IMR-90 (cell line): ENCODE measurements at regions of chr7 and their contacts with region 1.

Region 1: DNA sequence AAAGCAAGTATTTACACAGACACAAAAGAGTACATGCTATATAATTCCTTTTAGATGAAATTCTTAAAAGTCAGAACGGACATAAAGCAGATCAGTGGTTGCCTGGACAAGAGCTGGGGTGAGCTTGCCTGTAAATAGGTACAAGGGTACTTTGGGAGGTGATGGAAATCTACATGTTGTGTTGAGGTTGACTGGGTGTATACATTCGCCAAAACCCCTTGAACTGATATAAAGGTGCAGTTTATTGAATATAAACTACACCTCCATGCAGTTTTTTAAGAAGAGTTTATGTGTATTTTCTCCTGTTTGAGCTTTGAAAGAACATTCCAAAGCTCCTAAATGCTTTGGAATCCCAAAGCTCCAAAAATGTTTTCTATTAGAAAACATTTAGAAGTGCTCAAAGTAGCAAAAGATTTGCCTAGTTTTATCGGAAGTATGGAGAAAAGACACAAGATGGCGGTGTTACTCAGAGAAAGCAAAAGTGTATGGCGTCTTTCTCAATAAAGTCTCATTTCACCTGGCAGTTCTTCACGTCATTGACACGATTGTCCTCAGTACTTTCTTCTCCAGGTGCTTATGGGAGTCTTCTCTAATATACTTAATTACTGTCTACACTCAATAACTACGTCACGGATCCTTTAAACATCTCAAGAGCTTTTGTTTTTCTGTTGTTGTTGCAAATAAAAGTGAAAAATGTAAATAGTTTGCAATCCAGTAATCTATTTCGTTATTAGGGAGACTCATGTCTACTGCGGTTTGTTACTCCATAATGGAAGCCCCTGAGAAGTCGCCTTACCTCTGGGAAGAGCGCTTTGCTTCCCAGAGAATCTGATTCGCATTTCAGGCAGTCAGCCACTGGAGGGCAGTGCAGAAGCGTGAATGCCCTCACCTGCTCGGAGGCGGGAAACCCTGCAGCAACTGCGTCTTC is 14.7 kb upstream of the SEC61G start:
- DNase-seq: peak; percentile 84
- ATAC-seq: peak; percentile 95
- H3K4me3 ChIP-seq: peak overlapping the region; percentile 31; the same call in 1 of the 2 replicates
- H3K27ac ChIP-seq: no peak overlapping the region
- H3K4me1 ChIP-seq: no peaks in the 10 kb centered on the region
- H3K27me3 ChIP-seq: no peaks in the 10 kb centered on the region
- CTCF ChIP-seq: peak; percentile 92
- POLR2A ChIP-seq: peak; percentile 53; the same call in 1 of the 2 replicates
- RAD21 ChIP-seq: peak; percentile 99

Region 2: GRCh38 chr7:54788664-54789063 is 14.9 kb after region 1 on chr7:
- CTCF ChIA-PET with region 1: interaction called, 13 read pairs
- POLR2A ChIA-PET with region 1: no interaction called
- dilution Hi-C with region 1: no loop called
- in situ Hi-C with region 1: no loop called
- intact Hi-C with region 1: no loop called
- DNase-seq: peak; percentile 96
- ATAC-seq: peak; percentile 98
- H3K4me3 ChIP-seq: no peak overlapping the region; the same call in 1 of the 2 replicates
- H3K27ac ChIP-seq: no peak overlapping the region
- H3K4me1 ChIP-seq: peaks cover 2% of the 10 kb centered on the region; the same call in 1 of the 2 replicates
- H3K27me3 ChIP-seq: no peaks in the 10 kb centered on the region
- CTCF ChIP-seq: peak; percentile 96
- POLR2A ChIP-seq: peak; percentile 46; the same call in 1 of the 2 replicates
- RAD21 ChIP-seq: peak; percentile 96

Region 3: GRCh38 chr7:55192718-55193117 is 419.0 kb after region 1 on chr7:
- CTCF ChIA-PET with region 1: no interaction called
- POLR2A ChIA-PET with region 1: no interaction called
- dilution Hi-C with region 1: no loop called
- in situ Hi-C with region 1: no loop called
- intact Hi-C with region 1: loop called (anchors 10 kb)
- DNase-seq: peak; percentile 88
- ATAC-seq: peak; percentile 76
- H3K4me3 ChIP-seq: no peak overlapping the region
- H3K27ac ChIP-seq: peak overlapping the region; percentile 93
- H3K4me1 ChIP-seq: peaks cover 33% of the 10 kb centered on the region
- H3K27me3 ChIP-seq: no peaks in the 10 kb centered on the region
- CTCF ChIP-seq: no peak
- POLR2A ChIP-seq: no peak
- RAD21 ChIP-seq: no peak

Region 4: GRCh38 chr7:55265836-55266642 is 492.3 kb after region 1 on chr7:
- CTCF ChIA-PET with region 1: interaction called, 12 read pairs
- POLR2A ChIA-PET with region 1: no interaction called
- dilution Hi-C with region 1: no loop called
- in situ Hi-C with region 1: no loop called
- intact Hi-C with region 1: loop called (anchors 1 kb)
- DNase-seq: peak; percentile 27
- ATAC-seq: peak; percentile 51; the same call in 1 of the 2 replicates
- H3K4me3 ChIP-seq: no peak overlapping the region
- H3K27ac ChIP-seq: no peak overlapping the region
- H3K4me1 ChIP-seq: peaks cover 2% of the 10 kb centered on the region; the same call in 1 of the 2 replicates
- H3K27me3 ChIP-seq: peaks cover 33% of the 10 kb centered on the region
- CTCF ChIP-seq: no peak
- POLR2A ChIP-seq: no peak
- RAD21 ChIP-seq: no peak

Region 5: GRCh38 chr7:55415173-55415778 is 641.5 kb after region 1 on chr7:
- CTCF ChIA-PET with region 1: no interaction called
- POLR2A ChIA-PET with region 1: no interaction called
- dilution Hi-C with region 1: no loop called
- in situ Hi-C with region 1: loop called (anchors 10 kb)
- intact Hi-C with region 1: loop called (anchors 2 kb)
- DNase-seq: peak; percentile 65
- ATAC-seq: peak; percentile 98
- H3K4me3 ChIP-seq: no peak overlapping the region
- H3K27ac ChIP-seq: no peak overlapping the region
- H3K4me1 ChIP-seq: no peaks in the 10 kb centered on the region
- H3K27me3 ChIP-seq: no peaks in the 10 kb centered on the region
- CTCF ChIP-seq: peak; percentile 80
- POLR2A ChIP-seq: no peak
- RAD21 ChIP-seq: peak; percentile 76